BJ (cell line): ENCODE measurements at regions of chr1 and their contacts with region 1.

Region 1: GRCh38 chr1:17045634-17046333 is 8.0 kb downstream of the SDHB start:
- DNase-seq: peak; percentile 8
- H3K4me3 ChIP-seq: 0 out of 2 replicates have a peak overlapping the region, but pooled peaks have one; percentile 10
- H3K27me3 ChIP-seq: no peaks in the 10 kb centered on the region
- CTCF ChIP-seq: peak; percentile 74

Region 2: GRCh38 chr1:16946646-16947045 is 99.1 kb before region 1 on chr1:
- CTCF ChIA-PET with region 1: interaction called, 81 read pairs
- POLR2A ChIA-PET with region 1: interaction called, 5 read pairs
- DNase-seq: no peak
- H3K4me3 ChIP-seq: no peak overlapping the region
- H3K27me3 ChIP-seq: no peaks in the 10 kb centered on the region
- CTCF ChIP-seq: no peak

Region 3: DNA sequence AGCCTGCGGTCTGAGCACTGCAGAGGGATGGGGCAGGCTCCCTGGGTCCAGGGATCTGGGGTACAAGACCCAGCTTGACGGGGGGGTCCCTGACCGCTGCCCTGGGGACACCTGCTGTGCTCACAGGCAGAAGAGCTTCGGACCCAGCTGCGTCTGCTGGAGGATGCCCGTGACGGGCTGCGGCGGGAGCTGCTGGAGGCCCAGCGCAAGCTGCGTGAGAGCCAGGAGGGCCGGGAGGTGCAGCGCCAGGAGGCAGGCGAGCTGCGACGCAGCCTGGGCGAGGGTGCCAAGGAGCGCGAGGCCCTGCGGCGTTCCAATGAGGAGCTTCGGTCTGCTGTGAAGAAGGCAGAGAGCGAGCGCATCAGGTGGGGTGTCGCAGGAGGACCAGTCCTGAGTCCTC is 90.6 kb before region 1 on chr1:
- CTCF ChIA-PET with region 1: interaction called, 81 read pairs
- POLR2A ChIA-PET with region 1: interaction called, 5 read pairs
- DNase-seq: no peak
- H3K4me3 ChIP-seq: no peak overlapping the region
- H3K27me3 ChIP-seq: no peaks in the 10 kb centered on the region
- CTCF ChIP-seq: no peak

Region 4: GRCh38 chr1:16960560-16961296 is 85.1 kb before region 1 on chr1:
- CTCF ChIA-PET with region 1: interaction called, 55 read pairs
- POLR2A ChIA-PET with region 1: interaction called, 6 read pairs
- DNase-seq: no peak
- H3K4me3 ChIP-seq: peak overlapping the region; percentile 25
- H3K27me3 ChIP-seq: no peaks in the 10 kb centered on the region
- CTCF ChIP-seq: peak; percentile 85

Region 5: DNA sequence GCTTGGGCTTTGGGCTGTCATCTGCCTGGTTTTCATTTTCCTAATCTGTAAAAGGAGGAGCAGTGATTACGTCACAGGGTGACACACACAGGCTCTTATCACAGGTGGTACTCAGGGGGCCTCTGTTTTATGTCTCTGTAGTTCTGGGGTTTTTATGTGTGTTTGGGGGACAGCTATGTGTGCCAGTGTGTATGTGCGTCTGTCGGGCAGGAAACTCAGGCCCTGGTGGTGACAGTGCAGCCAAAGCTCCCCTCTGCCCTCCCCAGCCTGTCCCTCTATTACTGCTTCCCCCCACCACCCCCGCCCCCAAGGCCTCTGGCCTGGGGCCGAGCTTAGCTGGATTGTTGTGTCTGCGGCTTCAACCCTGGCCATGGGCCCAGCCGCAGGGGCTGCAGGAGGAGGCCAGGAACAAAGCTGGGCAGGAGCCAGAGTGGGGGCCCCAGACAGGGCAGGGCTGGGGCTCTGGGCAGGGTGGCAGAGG is 78.6 kb before region 1 on chr1:
- CTCF ChIA-PET with region 1: interaction called, 55 read pairs
- POLR2A ChIA-PET with region 1: interaction called, 6 read pairs
- DNase-seq: no peak
- H3K4me3 ChIP-seq: no peak overlapping the region
- H3K27me3 ChIP-seq: no peaks in the 10 kb centered on the region
- CTCF ChIP-seq: no peak

Region 6: DNA sequence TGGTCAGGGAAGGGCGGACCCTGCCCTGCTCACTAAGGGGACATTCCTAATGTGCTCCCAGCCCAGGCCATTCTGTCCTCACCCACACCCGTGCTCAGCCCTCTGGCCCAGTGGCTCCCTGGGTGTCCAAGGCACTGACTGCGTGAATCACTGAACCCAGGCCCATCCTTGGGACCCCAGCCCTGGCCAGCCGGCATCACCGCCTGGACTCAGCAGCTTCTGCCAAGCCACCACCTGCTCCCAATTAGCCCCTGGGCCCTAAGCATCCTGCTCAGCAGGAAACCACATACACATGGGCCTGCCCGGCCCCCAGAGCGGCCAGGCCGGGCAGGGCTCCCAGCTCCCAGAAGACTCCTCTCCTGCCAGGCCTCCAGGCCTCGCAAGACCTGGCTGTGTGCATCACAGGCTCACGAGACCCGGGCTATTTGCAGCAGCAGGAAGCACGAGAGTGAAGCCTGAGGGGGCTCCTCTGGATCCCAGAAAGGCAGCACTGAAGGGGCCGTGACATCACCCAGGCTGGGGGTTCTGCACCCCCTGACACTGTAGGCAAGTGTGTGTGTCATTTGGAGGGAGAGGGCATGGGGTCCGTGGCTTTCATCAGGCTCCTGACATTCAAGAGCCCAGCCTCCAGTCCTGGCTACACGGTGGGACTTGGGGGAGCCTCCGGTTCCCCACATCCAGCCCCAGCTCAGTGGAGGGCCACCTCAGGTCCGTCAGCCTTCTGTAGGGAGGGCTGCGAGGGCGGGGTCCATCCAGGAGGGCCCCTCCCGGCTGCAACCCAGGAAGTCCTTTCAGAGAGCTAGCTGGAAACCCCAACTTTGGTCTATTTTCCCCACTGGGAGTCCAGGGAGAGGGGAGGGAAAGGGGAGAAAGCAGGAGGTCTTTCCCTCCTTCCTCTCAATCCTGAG is 67.0 kb before region 1 on chr1:
- CTCF ChIA-PET with region 1: interaction called, 15 read pairs
- POLR2A ChIA-PET with region 1: no interaction called
- DNase-seq: peak; percentile 90
- H3K4me3 ChIP-seq: peak overlapping the region; percentile 66
- H3K27me3 ChIP-seq: no peaks in the 10 kb centered on the region
- CTCF ChIP-seq: no peak

Region 7: GRCh38 chr1:17032741-17033140 is 13.0 kb before region 1 on chr1:
- CTCF ChIA-PET with region 1: interaction called, 13 read pairs
- POLR2A ChIA-PET with region 1: no interaction called
- DNase-seq: no peak
- H3K4me3 ChIP-seq: no peak overlapping the region
- H3K27me3 ChIP-seq: no peaks in the 10 kb centered on the region
- CTCF ChIP-seq: no peak

Region 8: GRCh38 chr1:17075470-17076255 is 29.9 kb after region 1 on chr1:
- CTCF ChIA-PET with region 1: no interaction called
- POLR2A ChIA-PET with region 1: no interaction called
- DNase-seq: no peak
- H3K4me3 ChIP-seq: no peak overlapping the region
- H3K27me3 ChIP-seq: peaks cover 3% of the 10 kb centered on the region
- CTCF ChIP-seq: peak; percentile 45

Region 9: GRCh38 chr1:17168091-17168876 is 122.5 kb after region 1 on chr1:
- CTCF ChIA-PET with region 1: no interaction called
- POLR2A ChIA-PET with region 1: no interaction called
- DNase-seq: peak; percentile 82
- H3K4me3 ChIP-seq: no peak overlapping the region
- H3K27me3 ChIP-seq: no peaks in the 10 kb centered on the region
- CTCF ChIP-seq: no peak